Calu3 (cell line): ENCODE measurements at regions of chr12 and their contacts with region 1.

Region 1: GRCh38 chr12:131132118-131132892 is 178.6 kb downstream of the ADGRD1 start:
- DNase-seq: peak; percentile 90
- H3K4me3 Mint-ChIP-seq: no peak overlapping the region
- H3K27ac Mint-ChIP-seq: no peak overlapping the region
- H3K4me1 Mint-ChIP-seq: no peaks in the 10 kb centered on the region
- H3K27me3 Mint-ChIP-seq: peaks cover 52% of the 10 kb centered on the region
- CTCF ChIP-seq: peak; percentile 91

Region 2: DNA sequence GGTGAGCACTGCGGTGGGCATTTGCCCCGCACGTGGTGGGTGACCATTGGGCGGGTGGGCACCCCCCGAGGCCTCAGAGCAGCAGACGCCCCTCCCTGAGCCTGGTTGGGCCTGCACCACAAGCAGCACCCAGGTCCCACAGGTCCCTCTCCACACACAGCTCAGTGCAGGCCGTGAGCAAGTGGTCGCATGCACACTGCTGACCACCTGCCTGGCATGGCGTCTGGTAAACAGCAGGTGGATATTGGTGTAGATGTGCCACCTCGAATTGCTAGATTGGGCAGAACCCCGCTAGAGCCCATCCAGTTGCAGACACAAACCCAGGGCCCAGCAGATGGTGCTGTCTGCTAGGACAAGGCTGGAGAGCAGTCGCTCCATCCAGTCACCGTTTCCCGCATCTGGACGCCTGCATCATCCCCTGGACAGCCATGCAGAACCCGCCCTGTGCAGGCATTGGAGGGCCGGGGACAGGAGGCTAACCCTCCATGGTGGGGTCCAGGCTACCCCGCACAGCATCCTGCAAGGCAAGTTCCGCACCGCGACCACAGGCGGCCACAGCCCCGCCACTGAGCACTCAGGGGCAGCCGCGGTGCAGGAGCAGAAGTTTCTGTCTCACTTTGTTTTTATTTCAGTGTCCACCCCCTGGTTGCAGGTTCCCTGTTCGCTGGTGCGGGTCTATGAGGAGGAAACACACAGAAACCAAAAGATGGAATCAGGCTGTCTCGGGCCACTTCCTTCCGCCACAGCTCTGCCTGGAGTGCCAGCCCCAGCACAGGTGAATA is 370.6 kb before region 1 on chr12:
- CTCF ChIA-PET with region 1: no interaction called
- intact Hi-C with region 1: loop called (anchors 2 kb)
- DNase-seq: peak; percentile 79
- H3K4me3 Mint-ChIP-seq: no peak overlapping the region
- H3K27ac Mint-ChIP-seq: no peak overlapping the region
- H3K4me1 Mint-ChIP-seq: no peaks in the 10 kb centered on the region
- H3K27me3 Mint-ChIP-seq: peaks cover 13% of the 10 kb centered on the region
- CTCF ChIP-seq: peak; percentile 48

Region 3: DNA sequence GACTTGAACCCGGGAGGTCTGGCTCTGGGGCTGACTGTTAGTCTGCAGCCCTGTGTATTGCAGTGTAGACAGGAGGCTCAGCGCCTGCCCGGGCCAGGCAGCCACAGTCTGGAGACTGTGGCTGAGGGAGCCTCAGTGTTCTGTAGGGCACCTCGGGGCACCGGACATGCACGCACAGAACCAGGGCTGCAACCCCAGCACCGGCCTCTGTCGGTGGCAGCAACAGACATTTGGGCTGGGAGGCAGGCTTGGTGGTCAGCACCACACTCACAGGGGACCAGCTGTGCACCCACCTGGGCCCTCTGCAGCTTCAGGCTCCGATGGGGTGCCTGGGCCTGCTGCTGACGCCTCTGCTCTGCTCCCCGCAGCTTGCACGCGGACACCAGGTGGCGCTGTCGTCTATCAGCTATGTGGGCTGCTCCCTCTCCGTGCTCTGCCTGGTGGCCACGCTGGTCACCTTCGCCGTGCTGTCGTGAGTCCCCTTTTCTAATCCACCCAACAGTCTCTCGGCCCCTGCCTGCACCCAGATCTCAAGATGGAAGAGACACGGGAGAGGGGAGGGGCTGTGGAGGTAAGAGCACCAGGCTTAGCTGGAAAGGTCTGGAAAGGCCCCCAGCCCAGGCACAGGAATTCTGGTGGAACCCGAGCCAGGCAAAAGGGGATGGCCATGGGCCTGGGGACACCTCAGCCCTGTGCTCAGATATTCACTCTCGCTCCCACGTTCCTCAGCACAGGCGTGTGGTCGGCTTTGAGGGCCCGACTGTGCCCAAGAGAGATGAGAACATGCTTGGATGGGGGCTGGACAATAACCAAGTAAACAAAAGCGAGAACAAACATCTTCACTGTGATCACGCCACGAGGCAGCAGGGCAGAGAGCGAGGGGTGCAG is 27.6 kb before region 1 on chr12:
- CTCF ChIA-PET with region 1: interaction called, 13 read pairs
- intact Hi-C with region 1: no loop called
- DNase-seq: peak; percentile 94
- H3K4me3 Mint-ChIP-seq: no peak overlapping the region
- H3K27ac Mint-ChIP-seq: no peak overlapping the region
- H3K4me1 Mint-ChIP-seq: no peaks in the 10 kb centered on the region
- H3K27me3 Mint-ChIP-seq: peaks cover 37% of the 10 kb centered on the region
- CTCF ChIP-seq: peak; percentile 92